Endothelial cell of umbilical vein (primary cell): ENCODE measurements at regions of chr5 and their contacts with region 1.

Region 1: DNA sequence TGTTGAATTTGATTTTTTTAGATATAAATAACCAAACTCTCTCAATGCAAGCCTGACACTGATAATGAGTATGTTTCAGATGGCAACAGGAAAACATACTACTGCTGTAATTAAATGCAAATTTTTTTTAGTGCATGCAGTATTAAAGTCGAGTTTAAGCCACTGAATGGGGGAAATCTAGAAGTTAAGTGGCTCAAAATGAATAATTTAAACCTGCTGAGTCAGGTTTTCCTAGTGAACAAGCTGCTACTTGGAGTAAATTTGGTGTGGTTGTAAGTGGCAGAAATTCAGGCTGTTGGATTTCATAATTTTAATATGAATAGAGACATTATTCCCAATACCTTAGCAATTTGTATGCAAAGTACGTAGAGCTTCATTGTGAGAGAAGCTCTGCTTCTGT is 121.8 kb downstream of the SLF1 start:
- DNase-seq: no peak
- H3K4me3 ChIP-seq: no peak overlapping the region
- H3K27ac ChIP-seq: no peak overlapping the region
- H3K4me1 ChIP-seq: no peaks in the 10 kb centered on the region
- H3K27me3 ChIP-seq: no peaks in the 10 kb centered on the region
- CTCF ChIP-seq: no peak
- POLR2A ChIP-seq: no peak

Region 2: DNA sequence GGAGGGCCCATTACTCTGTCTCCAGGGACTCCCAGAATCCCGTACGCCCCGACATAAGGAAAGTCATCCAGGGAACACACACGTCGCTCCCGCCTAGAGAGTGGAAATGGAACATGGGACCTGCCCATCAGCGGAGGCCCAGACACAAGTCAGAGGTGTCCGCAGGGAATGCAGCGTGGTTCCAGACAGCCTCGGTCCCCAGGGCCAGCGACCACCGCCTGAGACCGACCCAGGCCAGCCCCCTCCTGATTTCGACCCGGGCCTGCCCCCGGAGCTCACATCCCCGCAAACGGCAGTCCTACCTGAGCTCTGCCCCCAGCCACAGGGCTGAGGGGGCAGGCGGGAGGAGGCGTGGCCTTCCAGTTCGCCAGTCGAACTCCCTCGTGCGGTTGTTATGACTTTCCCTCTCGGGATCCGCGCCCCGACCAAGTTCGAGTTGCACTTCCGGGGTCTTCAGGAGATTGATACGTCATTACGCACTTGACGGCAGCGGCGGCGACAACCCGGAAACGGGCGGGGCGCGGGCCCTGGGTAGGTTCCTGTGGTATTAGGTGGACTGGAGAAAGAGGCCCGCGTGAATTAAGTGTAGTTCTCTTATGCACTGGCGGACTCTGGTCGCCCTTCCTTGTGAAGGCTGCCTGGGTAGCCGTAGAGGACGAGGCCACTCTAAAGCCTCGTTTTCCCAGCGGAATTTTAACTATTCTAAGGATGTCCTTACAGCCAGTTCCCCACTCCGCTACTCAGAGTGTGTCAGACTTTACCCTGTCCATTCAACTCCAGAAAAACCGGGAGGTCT is 628.9 kb before region 1 on chr5:
- CTCF ChIA-PET with region 1: no interaction called
- POLR2A ChIA-PET with region 1: no interaction called
- dilution Hi-C with region 1: no loop called
- intact Hi-C with region 1: loop called (anchors 2 kb)
- DNase-seq: peak; percentile 93
- H3K4me3 ChIP-seq: peak overlapping the region; percentile 18 to 81 (median 61)
- H3K27ac ChIP-seq: peak overlapping the region; percentile 76
- H3K4me1 ChIP-seq: peaks cover 5% of the 10 kb centered on the region
- H3K27me3 ChIP-seq: peaks cover 3 to 4% of the 10 kb centered on the region in 2 experiments
- CTCF ChIP-seq: no peak
- POLR2A ChIP-seq: peak; percentile 76

Region 3: GRCh38 chr5:94524841-94525697 is 215.2 kb before region 1 on chr5:
- CTCF ChIA-PET with region 1: interaction called, 69 read pairs
- POLR2A ChIA-PET with region 1: no interaction called
- dilution Hi-C with region 1: no loop called
- intact Hi-C with region 1: loop called (anchors 1 kb)
- DNase-seq: peak; percentile 60
- H3K4me3 ChIP-seq: no peak overlapping the region
- H3K27ac ChIP-seq: no peak overlapping the region
- H3K4me1 ChIP-seq: no peaks in the 10 kb centered on the region
- H3K27me3 ChIP-seq: no peaks in the 10 kb centered on the region
- CTCF ChIP-seq: peak; percentile 41 to 46
- POLR2A ChIP-seq: no peak

Region 4: GRCh38 chr5:94613583-94613982 is 126.7 kb before region 1 on chr5:
- CTCF ChIA-PET with region 1: interaction called, 15 read pairs
- POLR2A ChIA-PET with region 1: no interaction called
- dilution Hi-C with region 1: no loop called
- intact Hi-C with region 1: loop called (anchors 2 kb)
- DNase-seq: peak; percentile 24
- H3K4me3 ChIP-seq: no peak overlapping the region
- H3K27ac ChIP-seq: no peak overlapping the region
- H3K4me1 ChIP-seq: peaks cover 4% of the 10 kb centered on the region
- H3K27me3 ChIP-seq: no peaks in the 10 kb centered on the region
- CTCF ChIP-seq: peak; percentile 10 to 11
- POLR2A ChIP-seq: no peak

Region 5: DNA sequence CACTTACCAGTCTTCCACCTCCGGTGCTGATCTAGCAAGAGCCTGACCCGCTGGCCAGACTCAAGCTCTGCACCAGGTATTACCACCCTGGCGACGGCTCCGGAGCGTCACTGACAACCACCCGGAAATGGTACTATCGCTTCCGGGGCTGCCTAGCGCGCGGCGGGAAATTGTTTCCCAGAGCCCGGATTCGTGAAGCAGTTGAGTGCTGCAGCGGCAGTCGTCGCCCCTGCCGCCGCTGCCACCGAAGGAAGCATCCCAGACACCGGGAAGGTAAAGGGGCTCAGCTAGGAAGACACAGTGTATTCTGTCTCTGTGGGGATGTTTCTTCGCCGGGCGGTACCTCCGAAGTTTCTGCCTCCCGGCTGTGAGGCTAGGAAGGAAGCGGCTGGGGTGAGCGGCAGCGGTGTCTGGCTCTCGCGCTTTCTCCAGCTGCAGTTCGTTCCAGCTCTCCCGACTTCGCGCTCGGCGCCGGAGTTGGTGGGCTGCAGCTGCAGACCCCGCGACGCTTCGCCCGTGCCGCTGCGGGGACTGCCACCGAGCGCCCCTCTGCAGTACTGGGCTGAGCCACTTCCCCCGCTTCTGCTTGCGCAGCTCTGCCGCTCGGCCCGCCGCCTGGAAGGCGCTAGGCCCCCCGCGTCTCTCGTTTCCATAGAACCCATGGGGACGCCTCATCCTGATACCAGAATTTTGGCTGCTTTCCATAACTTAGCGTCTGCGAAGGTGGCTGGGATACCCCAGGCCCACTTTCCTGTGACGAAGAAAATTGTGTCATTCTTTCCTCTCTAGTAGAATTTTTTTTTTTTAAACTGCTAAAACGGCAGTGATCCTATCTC is 121.6 kb before region 1 on chr5 and contains the starts of genes KIAA0825 and SLF1:
- CTCF ChIA-PET with region 1: interaction called, 15 read pairs
- POLR2A ChIA-PET with region 1: no interaction called
- dilution Hi-C with region 1: no loop called
- intact Hi-C with region 1: loop called (anchors 2 kb)
- DNase-seq: peak; percentile 91
- H3K4me3 ChIP-seq: peak within 1 kb of the TSS; percentile 73 to 90 (median 79)
- H3K27ac ChIP-seq: peak within 1 kb of the TSS; percentile 66
- H3K4me1 ChIP-seq: peaks cover 12% of the 10 kb centered on the region
- H3K27me3 ChIP-seq: no peaks in the 10 kb centered on the region
- CTCF ChIP-seq: no peak
- POLR2A ChIP-seq: peak; percentile 43
- total RNA-seq, gene KIAA0825: 1.1 and 1.3 TPM in 2 replicates
- total RNA-seq, gene SLF1: 6.4 and 8.5 TPM in 2 replicates

Region 6: DNA sequence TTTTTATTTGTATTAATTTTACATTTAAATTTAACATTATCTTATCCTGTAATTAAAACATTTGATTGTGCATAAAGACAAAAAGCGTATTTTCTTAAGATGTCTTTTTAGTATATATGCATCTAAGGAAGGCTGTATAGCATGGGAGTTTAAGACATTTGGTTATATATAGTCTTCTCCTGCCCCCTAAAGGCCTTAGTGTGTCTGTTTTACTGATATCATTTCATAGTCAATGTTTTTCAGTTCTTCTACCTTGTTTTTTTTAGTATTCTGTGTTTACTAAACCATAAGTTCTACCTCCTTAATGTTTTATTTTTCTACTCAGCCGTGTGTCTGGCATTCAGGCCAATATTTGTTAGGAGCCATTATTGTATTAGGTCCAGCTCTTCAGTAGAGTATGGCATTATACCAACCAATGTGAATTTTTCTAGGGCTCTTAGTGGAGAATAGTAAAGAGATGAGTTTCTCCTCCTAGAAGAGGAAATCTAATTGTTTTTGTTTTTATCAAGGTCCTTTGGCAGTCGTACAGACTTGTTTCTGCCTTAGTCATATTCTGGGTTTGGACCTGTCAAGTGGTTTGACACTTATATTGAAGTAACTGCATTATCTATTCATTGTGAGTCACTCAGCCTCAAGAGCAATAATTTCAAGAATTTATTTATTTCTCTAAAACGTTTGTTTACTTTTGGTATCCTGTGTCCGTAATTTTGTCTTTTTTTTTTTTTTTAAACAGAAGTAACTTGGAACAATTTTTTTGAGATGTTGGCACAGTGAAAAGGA is 47.1 kb before region 1 on chr5:
- CTCF ChIA-PET with region 1: interaction called, 10 read pairs
- POLR2A ChIA-PET with region 1: no interaction called
- dilution Hi-C with region 1: no loop called
- intact Hi-C with region 1: no loop called
- DNase-seq: peak; percentile 65
- H3K4me3 ChIP-seq: no peak overlapping the region
- H3K27ac ChIP-seq: peak overlapping the region; percentile 29
- H3K4me1 ChIP-seq: peaks cover 15% of the 10 kb centered on the region
- H3K27me3 ChIP-seq: no peaks in the 10 kb centered on the region
- CTCF ChIP-seq: peak; percentile 13 to 19
- POLR2A ChIP-seq: peak; percentile 30

Region 7: DNA sequence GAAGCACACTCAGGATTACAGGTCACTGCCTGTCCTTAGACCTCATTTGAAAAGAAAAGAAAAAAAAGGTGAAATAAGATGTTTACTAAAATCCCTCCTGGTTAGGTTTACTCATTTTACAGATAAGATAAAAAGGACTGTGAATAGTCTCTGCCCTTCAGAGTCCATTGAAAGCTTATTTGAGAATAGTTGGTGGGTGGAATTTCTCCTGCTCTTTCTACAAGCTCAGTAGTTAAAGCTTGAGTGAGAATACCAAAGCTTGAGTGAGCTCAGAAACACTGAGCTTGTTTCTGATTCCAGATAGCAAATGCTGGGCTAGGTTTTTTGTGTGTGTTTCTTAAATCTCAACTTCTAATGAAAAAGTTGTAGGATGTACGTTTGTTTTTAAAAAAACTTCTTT is 15.1 kb before region 1 on chr5:
- CTCF ChIA-PET with region 1: interaction called, 17 read pairs
- POLR2A ChIA-PET with region 1: no interaction called
- dilution Hi-C with region 1: no loop called
- intact Hi-C with region 1: no loop called
- DNase-seq: no peak
- H3K4me3 ChIP-seq: no peak overlapping the region
- H3K27ac ChIP-seq: no peak overlapping the region
- H3K4me1 ChIP-seq: no peaks in the 10 kb centered on the region
- H3K27me3 ChIP-seq: no peaks in the 10 kb centered on the region
- CTCF ChIP-seq: no peak
- POLR2A ChIP-seq: no peak